IMR-90 (cell line): ENCODE measurements at regions of chr1 and their contacts with region 1.

Region 1: GRCh38 chr1:212368073-212368484 is 46.6 kb downstream of the PACC1 start:
- DNase-seq: peak; percentile 81
- ATAC-seq: peak; percentile 98
- H3K4me3 ChIP-seq: no peak overlapping the region
- H3K27ac ChIP-seq: no peak overlapping the region
- H3K4me1 ChIP-seq: no peaks in the 10 kb centered on the region
- H3K27me3 ChIP-seq: no peaks in the 10 kb centered on the region
- CTCF ChIP-seq: peak; percentile 88
- POLR2A ChIP-seq: no peak
- RAD21 ChIP-seq: peak; percentile 93

Region 2: GRCh38 chr1:212062832-212063438 is 305.1 kb before region 1 on chr1:
- CTCF ChIA-PET with region 1: interaction called, 6 read pairs
- POLR2A ChIA-PET with region 1: no interaction called
- dilution Hi-C with region 1: no loop called
- in situ Hi-C with region 1: no loop called
- intact Hi-C with region 1: loop called (anchors 1 kb)
- DNase-seq: peak; percentile 57
- ATAC-seq: peak; percentile 80
- H3K4me3 ChIP-seq: no peak overlapping the region
- H3K27ac ChIP-seq: no peak overlapping the region
- H3K4me1 ChIP-seq: no peaks in the 10 kb centered on the region
- H3K27me3 ChIP-seq: no peaks in the 10 kb centered on the region
- CTCF ChIP-seq: peak; percentile 69
- POLR2A ChIP-seq: no peak
- RAD21 ChIP-seq: peak; percentile 62

Region 3: DNA sequence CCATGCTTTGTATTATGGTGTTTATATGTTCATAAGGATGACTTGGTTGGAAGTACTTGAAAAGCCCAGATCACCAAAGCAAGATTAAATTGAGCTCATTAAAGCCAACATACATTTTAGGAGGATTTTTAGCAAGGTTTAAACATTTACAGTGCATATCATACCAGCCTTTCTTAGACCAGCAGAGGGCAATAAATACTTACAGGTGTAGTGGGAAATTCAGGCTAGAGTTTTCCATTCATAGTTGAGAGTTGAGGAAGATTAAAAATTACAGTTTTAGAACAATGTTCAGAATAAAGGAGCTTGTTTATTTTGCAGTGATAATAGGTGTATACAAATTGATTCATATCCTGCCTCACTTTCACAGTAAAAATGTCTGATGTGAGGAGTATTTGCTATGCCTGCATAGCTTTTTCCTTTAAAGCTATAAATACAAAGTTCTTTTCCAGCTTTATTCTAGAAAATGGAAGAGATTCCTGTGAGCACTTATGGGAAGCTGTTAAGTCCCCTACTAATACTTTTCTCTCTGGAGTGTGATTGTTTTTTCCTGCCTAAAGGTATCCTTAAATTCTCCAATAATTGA is 297.3 kb before region 1 on chr1:
- CTCF ChIA-PET with region 1: interaction called, 32 read pairs
- POLR2A ChIA-PET with region 1: no interaction called
- dilution Hi-C with region 1: no loop called
- in situ Hi-C with region 1: loop called (anchors 5 kb)
- intact Hi-C with region 1: loop called (anchors 1 kb)
- DNase-seq: peak; percentile 70
- ATAC-seq: peak; percentile 78
- H3K4me3 ChIP-seq: no peak overlapping the region
- H3K27ac ChIP-seq: no peak overlapping the region
- H3K4me1 ChIP-seq: no peaks in the 10 kb centered on the region
- H3K27me3 ChIP-seq: no peaks in the 10 kb centered on the region
- CTCF ChIP-seq: peak; percentile 91
- POLR2A ChIP-seq: peak; percentile 33; the same call in 1 of the 2 replicates
- RAD21 ChIP-seq: peak; percentile 93